Activated CD4-positive, alpha-beta T cell treated with anti-CD3 and anti-CD28 coated beads, Interleukin-2, amount 10 ng/mL, durations not matched to agents 7 days and 5 days (primary cell): ENCODE measurements at regions of chr7 and their contacts with region 1.

Region 1: GRCh38 chr7:146683439-146683838 is 566.8 kb downstream of the CNTNAP2 start:
- DNase-seq: no peak
- H3K4me3 Mint-ChIP-seq: no peak overlapping the region
- H3K27ac Mint-ChIP-seq: no peak overlapping the region
- H3K4me1 Mint-ChIP-seq: no peaks in the 10 kb centered on the region
- H3K27me3 Mint-ChIP-seq: no peaks in the 10 kb centered on the region

Region 2: GRCh38 chr7:147363101-147363500 is 679.7 kb after region 1 on chr7:
- CTCF ChIA-PET with region 1: no interaction called
- POLR2A ChIA-PET with region 1: interaction called, 14 read pairs
- DNase-seq: no peak
- H3K4me3 Mint-ChIP-seq: no peak overlapping the region
- H3K27ac Mint-ChIP-seq: no peak overlapping the region
- H3K4me1 Mint-ChIP-seq: no peaks in the 10 kb centered on the region
- H3K27me3 Mint-ChIP-seq: no peaks in the 10 kb centered on the region